Caco-2 (cell line): ENCODE measurements at regions of chr11 and their contacts with region 1.

Region 1: GRCh38 chr11:62591448-62592145 is at the start of gene TUT1:
- DNase-seq: peak; percentile 98
- H3K4me3 ChIP-seq: peak within 1 kb of the TSS; percentile 51
- H3K4me3 Mint-ChIP-seq: peak within 1 kb of the TSS; percentile 88
- H3K27ac Mint-ChIP-seq: peak within 1 kb of the TSS; percentile 95
- H3K4me1 ChIP-seq: peaks cover 36% of the 10 kb centered on the region
- H3K4me1 Mint-ChIP-seq: peaks cover 18% of the 10 kb centered on the region
- H3K27me3 ChIP-seq: no peaks in the 10 kb centered on the region
- H3K27me3 Mint-ChIP-seq: no peaks in the 10 kb centered on the region
- CTCF ChIP-seq: no peak
- total RNA-seq, gene TUT1: 27.2 and 30.2 TPM in 2 replicates

Region 2: DNA sequence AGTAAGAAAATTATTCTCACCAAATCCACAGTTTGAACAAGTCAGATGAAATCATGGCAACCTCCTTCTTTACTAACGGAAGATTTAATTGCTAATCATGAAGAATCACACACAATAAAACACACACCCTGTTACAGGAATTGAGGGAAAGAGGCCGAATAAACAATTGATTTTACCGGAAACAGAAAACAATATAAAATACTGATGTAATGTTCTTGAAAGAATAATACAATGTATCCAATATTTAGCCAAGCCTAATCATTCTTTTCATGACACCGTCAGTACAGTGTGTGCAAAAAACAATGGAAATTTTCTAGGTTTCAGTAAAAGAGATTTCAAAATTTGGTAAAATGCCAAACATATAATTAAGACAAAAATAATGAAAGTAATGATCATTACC is 230.9 kb before region 1 on chr11:
- CTCF ChIA-PET with region 1: no interaction called
- POLR2A ChIA-PET with region 1: no interaction called
- intact Hi-C with region 1: no loop called
- DNase-seq: no peak
- H3K4me3 ChIP-seq: no peak overlapping the region
- H3K4me3 Mint-ChIP-seq: no peak overlapping the region
- H3K27ac Mint-ChIP-seq: no peak overlapping the region
- H3K4me1 ChIP-seq: no peaks in the 10 kb centered on the region
- H3K4me1 Mint-ChIP-seq: no peaks in the 10 kb centered on the region
- H3K27me3 ChIP-seq: no peaks in the 10 kb centered on the region
- H3K27me3 Mint-ChIP-seq: no peaks in the 10 kb centered on the region
- CTCF ChIP-seq: no peak

Region 3: GRCh38 chr11:62383822-62384221 is 207.8 kb before region 1 on chr11:
- CTCF ChIA-PET with region 1: no interaction called
- POLR2A ChIA-PET with region 1: no interaction called
- intact Hi-C with region 1: loop called (anchors 1 kb)
- DNase-seq: no peak
- H3K4me3 ChIP-seq: no peak overlapping the region
- H3K4me3 Mint-ChIP-seq: no peak overlapping the region
- H3K27ac Mint-ChIP-seq: no peak overlapping the region
- H3K4me1 ChIP-seq: peaks cover 24% of the 10 kb centered on the region
- H3K4me1 Mint-ChIP-seq: peaks cover 21% of the 10 kb centered on the region
- H3K27me3 ChIP-seq: no peaks in the 10 kb centered on the region
- H3K27me3 Mint-ChIP-seq: no peaks in the 10 kb centered on the region
- CTCF ChIP-seq: no peak

Region 4: DNA sequence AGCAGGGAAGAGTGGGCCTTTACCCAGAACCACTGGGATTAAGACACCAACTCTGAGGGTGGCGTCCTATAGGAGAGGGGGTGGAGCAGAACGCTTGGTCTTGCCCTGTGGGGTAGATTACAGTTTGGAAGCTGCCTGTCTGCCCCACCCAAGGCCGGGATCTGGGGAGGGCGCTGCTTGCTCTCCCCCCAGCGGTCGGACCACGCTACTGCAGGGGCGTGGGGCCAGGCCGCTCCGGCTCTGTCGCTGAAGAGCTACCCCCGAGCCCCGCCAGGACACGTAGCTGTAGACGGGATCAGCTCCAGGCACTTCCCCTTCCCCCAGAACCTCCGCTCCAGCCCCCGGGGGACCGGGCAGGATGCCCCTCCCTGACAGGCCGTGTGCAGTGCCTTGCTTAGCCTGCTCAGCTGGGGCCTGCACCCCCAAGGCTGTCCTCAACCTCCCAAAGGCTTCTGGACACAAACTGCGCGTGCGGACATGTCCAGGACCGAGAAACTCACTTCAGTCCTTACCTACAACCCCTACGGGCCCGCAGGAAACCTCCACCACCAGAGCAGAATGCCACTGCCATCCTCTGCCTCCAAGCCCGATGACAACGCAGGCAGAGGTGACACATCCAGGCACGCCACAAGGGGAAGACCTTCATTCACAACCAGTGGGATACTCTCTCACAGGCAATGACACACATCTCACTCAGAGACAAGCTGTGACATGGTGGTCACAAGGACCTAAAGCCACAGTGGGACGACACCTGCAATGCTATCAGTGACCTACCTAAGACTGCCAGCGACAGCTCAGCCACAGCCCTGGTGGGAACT is 48.6 kb before region 1 on chr11:
- CTCF ChIA-PET with region 1: interaction called, 5 read pairs
- POLR2A ChIA-PET with region 1: interaction called, 11 read pairs
- intact Hi-C with region 1: no loop called
- DNase-seq: peak; percentile 73 to 88
- H3K4me3 ChIP-seq: peak overlapping the region; percentile 11
- H3K4me3 Mint-ChIP-seq: peak overlapping the region; percentile 100
- H3K27ac Mint-ChIP-seq: peak overlapping the region; percentile 97
- H3K4me1 ChIP-seq: peaks cover 58% of the 10 kb centered on the region
- H3K4me1 Mint-ChIP-seq: peaks cover 40% of the 10 kb centered on the region
- H3K27me3 ChIP-seq: no peaks in the 10 kb centered on the region
- H3K27me3 Mint-ChIP-seq: no peaks in the 10 kb centered on the region
- CTCF ChIP-seq: peak; percentile 97 to 98

Region 5: DNA sequence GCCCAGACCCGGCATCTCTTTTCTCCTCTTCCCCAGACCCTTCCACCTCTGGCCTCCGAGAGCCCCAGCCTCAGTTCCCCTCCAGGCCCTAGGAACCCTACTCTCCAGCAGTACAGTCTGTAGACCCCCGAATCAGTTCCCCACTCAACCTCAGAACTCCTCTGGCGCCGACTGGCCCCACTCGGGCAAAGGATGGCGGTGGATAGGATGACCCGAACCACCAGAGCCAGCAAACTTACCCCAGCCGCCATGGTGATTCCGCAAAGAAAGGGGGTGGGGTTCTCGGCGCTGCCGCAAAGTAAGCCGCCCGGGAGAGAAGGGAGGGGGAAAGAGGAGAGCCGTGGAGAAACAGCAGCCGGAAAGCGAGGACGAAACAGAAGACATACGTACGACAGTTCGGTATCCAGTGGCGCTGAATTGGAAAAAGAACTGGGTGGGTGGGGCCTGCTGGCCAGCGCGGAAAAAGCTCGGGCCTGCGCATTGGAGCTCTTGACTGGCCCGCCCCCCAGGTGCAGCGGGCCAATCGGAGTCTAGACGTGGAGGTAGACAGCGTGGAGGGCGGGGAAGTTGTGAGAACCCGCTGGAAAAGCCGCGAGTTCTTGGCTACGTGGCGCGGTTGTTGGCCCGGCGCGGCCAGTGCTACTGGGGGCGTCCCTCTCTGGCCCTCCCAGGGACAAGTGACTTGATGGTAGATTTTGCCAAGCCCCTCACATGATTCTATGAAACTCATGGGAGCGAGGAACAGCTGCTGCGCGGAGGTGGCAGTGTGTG is 17.8 kb before region 1 on chr11 and contains the start of gene EEF1G:
- CTCF ChIA-PET with region 1: interaction called, 29 read pairs
- POLR2A ChIA-PET with region 1: interaction called, 116 read pairs
- intact Hi-C with region 1: loop called (anchors 1 kb)
- DNase-seq: peak; percentile 100
- H3K4me3 ChIP-seq: peak within 1 kb of the TSS; percentile 62
- H3K4me3 Mint-ChIP-seq: peak within 1 kb of the TSS; percentile 97
- H3K27ac Mint-ChIP-seq: peak within 1 kb of the TSS; percentile 100
- H3K4me1 ChIP-seq: peaks cover 25% of the 10 kb centered on the region
- H3K4me1 Mint-ChIP-seq: peaks cover 56% of the 10 kb centered on the region
- H3K27me3 ChIP-seq: no peaks in the 10 kb centered on the region
- H3K27me3 Mint-ChIP-seq: no peaks in the 10 kb centered on the region
- CTCF ChIP-seq: no peak
- total RNA-seq, gene EEF1G: 2,004 and 2,035 TPM in 2 replicates

Region 6: DNA sequence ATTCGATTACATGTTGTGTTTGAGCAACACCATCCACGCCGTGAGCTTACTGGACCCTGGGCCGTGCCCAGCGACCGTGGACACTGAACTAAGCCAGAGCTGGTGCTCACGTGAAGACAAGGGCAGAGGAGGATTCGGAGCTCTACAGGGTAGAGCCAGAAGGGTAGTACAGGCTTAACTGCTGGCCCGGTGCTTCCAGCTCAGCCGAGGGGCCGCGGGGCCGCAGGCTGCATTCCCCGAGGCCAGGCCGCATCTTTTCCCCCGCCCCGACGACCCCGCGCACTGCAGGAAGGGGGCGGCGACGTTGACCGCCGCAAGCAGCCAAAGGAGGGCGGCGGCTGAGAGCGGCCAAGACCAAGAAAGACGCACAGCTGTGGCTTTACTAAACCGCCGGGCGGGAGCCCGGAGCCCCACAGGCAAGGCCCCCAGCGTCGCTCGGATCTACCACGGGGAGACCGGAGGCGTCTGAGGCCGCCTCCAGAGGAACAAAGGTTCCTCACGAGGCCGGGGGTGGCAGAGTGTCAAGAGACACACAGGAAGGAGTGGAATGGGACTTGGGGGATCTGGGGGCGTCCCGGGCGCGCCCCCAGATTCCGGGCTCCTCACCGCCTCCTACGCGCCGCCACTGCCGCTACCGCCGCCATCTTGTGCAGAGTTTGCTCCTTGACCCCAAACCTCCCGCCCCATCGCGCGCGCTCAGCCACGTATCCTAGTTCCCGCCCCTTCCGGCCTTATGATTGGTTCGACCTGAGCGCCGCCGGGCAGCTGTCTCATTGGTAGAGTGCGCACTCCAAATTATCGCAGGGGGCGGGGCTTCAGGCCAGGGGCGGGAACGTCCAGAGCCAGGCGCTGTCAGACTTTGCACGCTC is 54.6 kb after region 1 on chr11 and contains the start of gene GANAB:
- CTCF ChIA-PET with region 1: interaction called, 11 read pairs
- POLR2A ChIA-PET with region 1: interaction called, 13 read pairs
- intact Hi-C with region 1: loop called (anchors 2 kb)
- DNase-seq: peak; percentile 99
- H3K4me3 ChIP-seq: peak within 1 kb of the TSS; percentile 66
- H3K4me3 Mint-ChIP-seq: peak within 1 kb of the TSS; percentile 91
- H3K27ac Mint-ChIP-seq: peak within 1 kb of the TSS; percentile 91
- H3K4me1 ChIP-seq: peaks cover 17% of the 10 kb centered on the region
- H3K4me1 Mint-ChIP-seq: no peaks in the 10 kb centered on the region
- H3K27me3 ChIP-seq: no peaks in the 10 kb centered on the region
- H3K27me3 Mint-ChIP-seq: no peaks in the 10 kb centered on the region
- CTCF ChIP-seq: no peak
- total RNA-seq, gene GANAB: 414 and 442 TPM in 2 replicates

Region 7: GRCh38 chr11:62671575-62672389 is 80.2 kb after region 1 on chr11 and contains the starts of genes LBHD1 and UQCC3:
- CTCF ChIA-PET with region 1: interaction called, 10 read pairs
- POLR2A ChIA-PET with region 1: interaction called, 11 read pairs
- intact Hi-C with region 1: no loop called
- DNase-seq: peak; percentile 87 to 91
- H3K4me3 ChIP-seq: peak within 1 kb of the TSS; percentile 90
- H3K4me3 Mint-ChIP-seq: peak within 1 kb of the TSS; percentile 98
- H3K27ac Mint-ChIP-seq: peak within 1 kb of the TSS; percentile 99
- H3K4me1 ChIP-seq: peaks cover 27% of the 10 kb centered on the region
- H3K4me1 Mint-ChIP-seq: peaks cover 15% of the 10 kb centered on the region
- H3K27me3 ChIP-seq: no peaks in the 10 kb centered on the region
- H3K27me3 Mint-ChIP-seq: no peaks in the 10 kb centered on the region
- CTCF ChIP-seq: no peak
- total RNA-seq, gene LBHD1: 11.9 and 13.6 TPM in 2 replicates
- total RNA-seq, gene UQCC3: 23.9 and 24.0 TPM in 2 replicates

Region 8: DNA sequence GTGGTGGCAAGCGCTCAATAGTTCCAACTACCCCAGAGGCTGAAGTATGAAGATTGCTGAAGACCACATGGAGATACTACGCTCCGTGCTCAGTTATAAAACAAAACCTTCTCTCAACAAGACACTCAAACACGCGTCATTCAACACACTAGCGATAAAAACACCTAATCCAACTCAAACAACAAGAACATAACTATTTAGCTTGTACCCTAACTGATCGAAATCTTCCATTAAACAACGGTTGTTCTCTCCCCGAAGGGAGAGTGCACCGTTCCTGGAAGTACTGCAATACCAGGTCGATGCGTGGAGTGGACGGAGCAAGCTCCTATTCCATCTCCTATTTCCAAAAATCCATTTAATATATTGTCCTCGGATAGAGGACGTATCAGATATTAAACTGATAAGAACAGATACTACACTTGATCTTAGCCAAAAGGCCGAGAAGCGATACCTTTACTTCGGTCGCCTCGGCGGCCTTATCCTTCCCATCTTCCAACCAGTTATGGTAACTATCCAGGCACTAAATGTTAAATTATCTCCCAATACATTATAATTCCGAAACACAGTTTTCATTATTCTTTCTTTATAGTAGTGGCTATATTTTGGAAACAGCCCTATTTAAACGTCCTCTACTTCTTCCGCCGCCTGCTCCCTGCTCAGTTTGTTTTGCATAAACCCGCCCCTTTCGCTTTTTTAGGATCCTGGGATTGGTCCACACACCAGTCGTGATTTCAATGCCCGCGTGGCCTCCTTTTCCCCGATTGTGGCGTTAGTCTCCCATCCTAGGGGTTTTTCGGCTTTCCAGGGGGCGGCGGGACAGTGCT is 250.0 kb after region 1 on chr11:
- CTCF ChIA-PET with region 1: no interaction called
- POLR2A ChIA-PET with region 1: interaction called, 10 read pairs
- intact Hi-C with region 1: no loop called
- DNase-seq: peak; percentile 96 to 98
- H3K4me3 ChIP-seq: peak overlapping the region; percentile 99
- H3K4me3 Mint-ChIP-seq: no peak overlapping the region
- H3K27ac Mint-ChIP-seq: no peak overlapping the region
- H3K4me1 ChIP-seq: no peaks in the 10 kb centered on the region
- H3K4me1 Mint-ChIP-seq: peaks cover 25% of the 10 kb centered on the region
- H3K27me3 ChIP-seq: no peaks in the 10 kb centered on the region
- H3K27me3 Mint-ChIP-seq: peaks cover 2% of the 10 kb centered on the region
- CTCF ChIP-seq: no peak